ENCODE measurements at regions of chr17 and their contacts with region 1.

Region 1: GRCh38 chr17:37047631-37048104 is 98.9 kb downstream of the AATF start:
- DNase-seq: peak; percentile 84 to 91
- ATAC-seq: peak; percentile 84
- H3K4me3 ChIP-seq: no peak overlapping the region
- H3K27ac ChIP-seq: no peak overlapping the region
- H3K4me1 ChIP-seq: no peaks in the 10 kb centered on the region
- H3K27me3 ChIP-seq: no peaks in the 10 kb centered on the region

Region 2: GRCh38 chr17:36601303-36602029 is 446.2 kb before region 1 on chr17 and contains the start of gene MRM1:
- intact Hi-C with region 1: loop called in 1 of 2 experiments (anchors 5 kb)
- DNase-seq: peak; percentile 97 to 98
- ATAC-seq: peak; percentile 96
- H3K4me3 ChIP-seq: peak within 1 kb of the TSS; percentile 50 to 55
- H3K27ac ChIP-seq: peak within 1 kb of the TSS; percentile 2 to 55
- H3K4me1 ChIP-seq: no peaks in the 10 kb centered on the region
- H3K27me3 ChIP-seq: no peaks in the 10 kb centered on the region
- total RNA-seq, gene MRM1: 2.7 to 3.6 TPM

Region 3: GRCh38 chr17:36629252-36629847 is 418.3 kb before region 1 on chr17:
- intact Hi-C with region 1: loop called (anchors 2 kb)
- DNase-seq: peak; percentile 79 to 92
- ATAC-seq: peak; percentile 86
- H3K4me3 ChIP-seq: no peak overlapping the region
- H3K27ac ChIP-seq: no peak overlapping the region
- H3K4me1 ChIP-seq: no peaks in the 10 kb centered on the region
- H3K27me3 ChIP-seq: no peaks in the 10 kb centered on the region

Region 4: GRCh38 chr17:37160944-37161343 is 113.3 kb after region 1 on chr17:
- intact Hi-C with region 1: no loop called
- DNase-seq: no peak
- ATAC-seq: no peak
- H3K4me3 ChIP-seq: no peak overlapping the region
- H3K27ac ChIP-seq: no peak overlapping the region
- H3K4me1 ChIP-seq: no peaks in the 10 kb centered on the region
- H3K27me3 ChIP-seq: no peaks in the 10 kb centered on the region

Measured in aorta (tissue), 5 donors.